ENCODE measurements at regions of chr4 and their contacts with region 1.

Region 1: GRCh38 chr4:47531241-47531953 is 46.3 kb downstream of the ATP10D start:
- DNase-seq: peak; percentile 81
- H3K4me3 ChIP-seq: no peak overlapping the region
- H3K27ac ChIP-seq: peak overlapping the region; percentile 81
- H3K4me1 ChIP-seq: peaks cover 43% of the 10 kb centered on the region
- H3K27me3 ChIP-seq: no peaks in the 10 kb centered on the region
- CTCF ChIP-seq: no peak
- POLR2A ChIP-seq: peak; percentile 41

Region 2: DNA sequence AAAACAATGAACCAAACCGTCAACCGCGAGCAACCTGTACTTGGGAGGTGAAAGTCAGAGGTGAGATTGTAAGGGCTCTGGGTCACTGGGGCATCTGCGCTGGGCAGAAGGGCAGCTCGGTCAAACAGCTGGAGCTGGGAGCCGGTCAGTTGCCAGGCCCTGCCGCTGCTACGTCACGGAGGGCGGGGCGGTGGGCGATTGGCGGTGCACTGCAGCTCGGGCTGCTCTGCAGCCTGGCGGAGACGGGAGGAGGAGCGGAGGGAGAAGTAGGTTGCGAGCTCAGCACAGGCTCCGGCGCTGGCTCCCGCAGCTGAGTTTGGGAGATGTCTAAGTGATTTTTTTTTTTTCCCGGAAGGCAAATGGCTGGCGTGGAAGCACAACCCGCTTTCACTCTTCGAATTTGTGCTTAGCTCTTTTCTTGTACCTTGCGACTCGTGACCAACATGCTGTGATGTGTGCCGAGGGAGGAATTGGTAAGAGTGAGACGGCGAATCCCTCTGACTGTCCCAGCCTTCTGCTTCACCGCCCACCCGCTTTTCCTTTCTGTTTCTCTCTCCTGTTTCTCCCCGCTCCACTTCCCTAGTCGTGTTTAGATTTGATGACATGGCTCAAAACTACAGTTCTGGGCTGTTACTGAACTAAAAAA is 46.2 kb before region 1 on chr4 and contains the start of gene ATP10D:
- CTCF ChIA-PET with region 1: interaction called, 3 read pairs
- POLR2A ChIA-PET with region 1: interaction called, 3 read pairs
- dilution Hi-C with region 1: no loop called
- intact Hi-C with region 1: loop called (anchors 1 kb)
- DNase-seq: peak; percentile 95
- H3K4me3 ChIP-seq: peak within 1 kb of the TSS; percentile 75 to 83 (median 79)
- H3K27ac ChIP-seq: peak within 1 kb of the TSS; percentile 77
- H3K4me1 ChIP-seq: peaks cover 2% of the 10 kb centered on the region
- H3K27me3 ChIP-seq: no peaks in the 10 kb centered on the region
- CTCF ChIP-seq: no peak
- POLR2A ChIP-seq: peak; percentile 94
- total RNA-seq, gene ATP10D: 30.9 and 34.1 TPM in 2 replicates

Region 3: DNA sequence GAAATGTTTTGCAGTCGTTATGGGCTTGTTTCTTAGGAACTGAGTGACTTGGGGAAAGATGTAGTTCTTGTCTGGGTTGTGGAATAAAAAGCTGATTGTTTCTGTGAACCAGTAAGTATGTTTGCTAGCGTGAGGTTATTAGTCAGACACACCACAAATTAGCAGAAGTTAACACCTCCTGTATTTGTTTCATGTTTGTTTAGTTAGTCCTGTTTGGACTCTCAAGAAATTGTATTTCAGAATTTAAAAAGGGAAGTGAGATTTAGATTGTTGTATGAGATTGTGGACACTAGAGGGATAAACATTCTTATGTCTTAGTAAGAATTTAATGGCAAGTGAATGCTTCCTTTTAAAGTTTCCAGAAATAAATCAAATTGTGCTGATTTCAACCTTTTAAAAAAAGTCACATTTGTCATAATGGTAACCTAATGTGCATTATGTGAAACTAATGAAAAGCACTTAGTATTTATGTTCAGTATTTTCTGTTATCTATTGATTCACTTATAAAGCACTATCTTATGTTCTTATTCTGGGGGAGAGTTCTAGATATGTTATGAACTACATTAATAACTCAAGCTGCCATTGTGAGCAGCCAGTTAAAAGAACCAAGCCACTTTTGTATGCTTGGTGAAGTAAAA is 20.8 kb before region 1 on chr4:
- CTCF ChIA-PET with region 1: interaction called, 3 read pairs
- POLR2A ChIA-PET with region 1: no interaction called
- dilution Hi-C with region 1: no loop called
- intact Hi-C with region 1: loop called (anchors 1 kb)
- DNase-seq: peak; percentile 68
- H3K4me3 ChIP-seq: no peak overlapping the region
- H3K27ac ChIP-seq: peak overlapping the region; percentile 45
- H3K4me1 ChIP-seq: peaks cover 11% of the 10 kb centered on the region
- H3K27me3 ChIP-seq: no peaks in the 10 kb centered on the region
- CTCF ChIP-seq: no peak
- POLR2A ChIP-seq: no peak

Region 4: GRCh38 chr4:47577779-47578553 is 46.6 kb after region 1 on chr4:
- CTCF ChIA-PET with region 1: no interaction called
- POLR2A ChIA-PET with region 1: no interaction called
- dilution Hi-C with region 1: no loop called
- intact Hi-C with region 1: loop called (anchors 1 kb)
- DNase-seq: peak; percentile 92
- H3K4me3 ChIP-seq: peak overlapping the region in 1 of 3 experiments; percentile 26
- H3K27ac ChIP-seq: peak overlapping the region; percentile 99
- H3K4me1 ChIP-seq: peaks cover 16% of the 10 kb centered on the region
- H3K27me3 ChIP-seq: no peaks in the 10 kb centered on the region
- CTCF ChIP-seq: no peak
- POLR2A ChIP-seq: peak; percentile 40